Activated CD8-positive, alpha-beta T cell treated with anti-CD3 and anti-CD28 coated beads for 36 hours (primary cell): ENCODE measurements at regions of chr14 and their contacts with region 1.

Region 1: DNA sequence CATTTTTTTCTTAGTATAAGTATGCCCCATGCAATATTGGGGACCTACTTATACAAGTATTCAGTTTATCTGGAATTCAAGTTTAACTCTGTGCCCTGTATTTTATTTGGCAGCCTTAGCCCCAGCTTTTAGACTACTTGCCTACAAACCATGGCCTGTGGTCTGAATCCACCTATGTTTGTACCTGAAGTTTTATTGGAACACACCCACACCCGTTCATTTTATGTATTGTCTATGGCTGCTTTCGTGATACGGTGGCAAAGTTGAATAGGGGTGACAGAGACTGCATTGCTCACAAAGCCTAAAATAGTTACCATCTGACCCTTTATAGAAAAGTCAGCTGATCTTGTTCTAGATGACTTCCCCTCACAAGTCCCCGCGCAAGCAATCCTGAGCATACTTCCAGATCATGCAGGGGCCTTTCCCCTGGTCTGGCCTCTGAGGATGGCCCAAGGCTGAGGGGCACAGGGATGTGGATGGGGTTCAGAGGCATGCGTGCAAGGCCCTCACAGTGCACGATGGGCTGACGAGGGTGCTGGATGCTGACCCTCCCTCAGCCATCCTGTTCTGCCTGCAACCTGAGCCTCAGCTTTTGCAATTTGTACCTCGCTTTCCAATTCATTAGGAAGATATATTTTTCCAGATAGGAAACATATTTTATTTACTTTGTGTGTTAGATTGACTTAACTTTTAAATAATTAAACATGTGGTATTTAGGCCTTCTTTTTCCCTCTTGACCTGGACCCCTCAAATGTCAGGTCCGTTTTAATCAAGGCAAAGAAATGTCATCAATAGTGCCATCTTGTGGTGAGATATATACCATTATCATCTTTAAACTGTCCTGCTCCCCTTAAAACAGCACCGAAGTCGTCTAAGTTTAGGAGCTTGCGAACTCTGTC is 527.3 kb upstream of the CCDC196 start:
- DNase-seq: no peak
- ATAC-seq: peak; percentile 55
- H3K4me3 Mint-ChIP-seq: no peak overlapping the region
- H3K27ac Mint-ChIP-seq: no peak overlapping the region
- H3K4me1 Mint-ChIP-seq: peaks cover 22% of the 10 kb centered on the region
- H3K27me3 Mint-ChIP-seq: no peaks in the 10 kb centered on the region
- CTCF ChIP-seq: peak; percentile 81

Region 2: DNA sequence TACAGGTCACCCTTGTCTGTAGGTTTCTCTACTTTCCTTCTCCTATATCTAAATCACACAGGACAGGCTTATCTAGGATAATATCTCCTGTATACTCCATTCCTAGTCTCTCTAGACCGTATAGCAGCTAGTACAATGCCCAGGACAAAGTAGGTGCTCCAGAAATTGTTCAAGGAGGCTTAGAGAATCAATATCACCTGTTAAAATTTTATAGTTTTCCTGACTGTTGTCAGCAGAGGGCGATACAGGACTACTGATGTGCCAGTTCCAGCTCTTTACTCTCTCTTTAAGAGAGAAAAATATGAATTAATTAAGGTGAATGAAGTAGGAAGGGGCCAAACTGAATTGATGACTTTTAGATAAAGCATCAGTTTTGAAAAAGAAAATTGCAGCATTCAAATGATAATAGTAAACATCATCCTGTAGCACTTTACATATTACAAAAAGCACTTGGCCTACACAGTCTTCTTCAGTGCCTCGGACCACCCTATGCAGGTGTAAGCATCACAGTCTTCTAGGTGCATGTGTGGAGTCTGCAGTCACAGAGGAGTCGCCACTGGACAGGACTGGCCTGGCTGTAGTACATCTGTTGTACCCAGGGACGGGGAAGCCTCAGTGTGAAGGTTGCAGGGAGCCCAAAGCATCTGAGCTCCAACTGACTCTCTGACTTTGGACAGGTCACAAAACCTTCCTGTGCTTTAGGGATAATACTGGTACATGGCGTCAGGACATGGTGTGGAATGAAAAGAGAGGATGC is 794.7 kb before region 1 on chr14:
- CTCF ChIA-PET with region 1: interaction called, 19 read pairs
- POLR2A ChIA-PET with region 1: no interaction called
- intact Hi-C with region 1: loop called (anchors 10 kb)
- DNase-seq: peak; percentile 54
- ATAC-seq: peak; percentile 65
- H3K4me3 Mint-ChIP-seq: no peak overlapping the region
- H3K27ac Mint-ChIP-seq: no peak overlapping the region
- H3K4me1 Mint-ChIP-seq: peaks cover 24% of the 10 kb centered on the region
- H3K27me3 Mint-ChIP-seq: no peaks in the 10 kb centered on the region
- CTCF ChIP-seq: peak; percentile 79

Region 3: DNA sequence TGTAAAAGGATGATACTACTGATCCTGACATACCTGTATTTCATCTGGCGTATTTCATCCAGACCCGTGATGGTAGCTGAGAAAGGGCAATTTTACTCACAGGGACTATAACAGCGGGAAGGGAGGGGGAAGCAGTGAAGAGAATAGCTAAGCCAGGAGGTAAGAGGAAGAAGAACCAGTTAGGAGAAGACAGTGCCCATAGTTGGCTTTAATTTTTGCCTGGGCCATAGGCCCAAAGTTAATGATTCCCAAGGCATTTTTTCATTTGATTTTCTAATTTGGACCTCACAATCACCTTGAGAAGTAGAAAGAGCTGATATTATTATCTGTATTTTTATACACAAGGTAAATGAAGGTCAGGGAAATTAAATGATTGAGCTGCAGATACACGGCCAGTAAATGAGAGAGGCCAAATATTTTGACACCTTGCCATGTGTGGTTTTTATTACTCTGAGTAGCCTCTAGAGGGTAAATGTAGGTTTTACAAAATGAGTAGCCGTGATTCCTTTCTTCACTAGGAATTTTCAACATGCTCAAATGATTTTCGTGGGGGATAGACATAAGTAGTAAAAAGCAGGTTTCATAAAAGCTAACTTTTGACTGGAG is 164.1 kb before region 1 on chr14:
- CTCF ChIA-PET with region 1: interaction called, 11 read pairs
- POLR2A ChIA-PET with region 1: no interaction called
- intact Hi-C with region 1: no loop called
- DNase-seq: no peak
- ATAC-seq: no peak
- H3K4me3 Mint-ChIP-seq: no peak overlapping the region
- H3K27ac Mint-ChIP-seq: no peak overlapping the region
- H3K4me1 Mint-ChIP-seq: no peaks in the 10 kb centered on the region
- H3K27me3 Mint-ChIP-seq: no peaks in the 10 kb centered on the region
- CTCF ChIP-seq: no peak

Region 4: DNA sequence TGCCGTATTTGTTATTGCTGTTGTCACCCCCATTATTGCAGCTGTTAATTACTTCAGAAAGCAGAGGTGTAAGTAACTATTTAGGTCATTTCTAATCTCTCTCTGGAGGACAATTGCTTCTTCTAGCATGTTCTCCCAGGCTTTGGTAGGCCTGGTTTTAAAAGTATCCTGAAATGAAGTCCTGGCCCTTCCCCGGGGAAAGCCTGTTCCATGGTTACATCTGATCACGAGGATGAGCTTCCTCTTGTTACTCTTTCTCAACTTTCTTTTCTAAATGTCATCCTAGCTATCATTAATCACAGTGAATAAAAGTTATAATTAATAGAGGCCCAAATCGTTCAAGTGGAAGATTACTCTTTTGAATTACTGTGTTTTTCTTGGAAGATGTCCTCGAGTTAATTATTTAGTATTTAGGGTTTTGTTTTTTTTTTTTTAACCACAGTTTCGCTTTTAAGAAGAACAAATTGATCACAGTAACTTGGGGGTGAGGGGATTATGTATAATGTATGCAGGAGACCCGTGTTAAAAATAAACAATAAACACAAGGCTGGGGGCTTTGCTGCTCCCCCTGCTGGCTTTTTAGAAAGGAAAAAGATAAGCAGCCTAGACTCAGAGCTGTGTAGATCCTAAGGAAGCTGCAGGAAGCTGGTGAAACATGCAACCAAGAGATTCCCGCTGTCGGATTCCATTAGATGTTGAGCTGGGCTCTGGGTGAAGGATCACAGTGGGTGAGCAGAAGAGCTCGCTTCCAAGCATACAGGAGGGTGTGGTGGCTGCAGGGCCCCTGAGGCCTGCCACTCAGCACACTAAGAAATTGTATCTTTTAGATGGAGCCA is 126.3 kb before region 1 on chr14:
- CTCF ChIA-PET with region 1: interaction called, 98 read pairs
- POLR2A ChIA-PET with region 1: no interaction called
- intact Hi-C with region 1: no loop called
- DNase-seq: no peak
- ATAC-seq: no peak
- H3K4me3 Mint-ChIP-seq: no peak overlapping the region
- H3K27ac Mint-ChIP-seq: no peak overlapping the region
- H3K4me1 Mint-ChIP-seq: peaks cover 24% of the 10 kb centered on the region
- H3K27me3 Mint-ChIP-seq: no peaks in the 10 kb centered on the region
- CTCF ChIP-seq: peak; percentile 33

Region 5: GRCh38 chr14:65866886-65867285 is 92.0 kb before region 1 on chr14:
- CTCF ChIA-PET with region 1: interaction called, 10 read pairs
- POLR2A ChIA-PET with region 1: no interaction called
- intact Hi-C with region 1: no loop called
- DNase-seq: no peak
- ATAC-seq: no peak
- H3K4me3 Mint-ChIP-seq: no peak overlapping the region
- H3K27ac Mint-ChIP-seq: no peak overlapping the region
- H3K4me1 Mint-ChIP-seq: peaks cover 45% of the 10 kb centered on the region
- H3K27me3 Mint-ChIP-seq: no peaks in the 10 kb centered on the region
- CTCF ChIP-seq: no peak

Region 6: GRCh38 chr14:65927931-65928356 is 31.0 kb before region 1 on chr14:
- CTCF ChIA-PET with region 1: interaction called, 43 read pairs
- POLR2A ChIA-PET with region 1: interaction called, 3 read pairs
- intact Hi-C with region 1: no loop called
- DNase-seq: peak; percentile 95
- ATAC-seq: peak; percentile 94
- H3K4me3 Mint-ChIP-seq: peak overlapping the region; percentile 34
- H3K27ac Mint-ChIP-seq: peak overlapping the region; percentile 75
- H3K4me1 Mint-ChIP-seq: peaks cover 48% of the 10 kb centered on the region
- H3K27me3 Mint-ChIP-seq: no peaks in the 10 kb centered on the region
- CTCF ChIP-seq: no peak

Region 7: DNA sequence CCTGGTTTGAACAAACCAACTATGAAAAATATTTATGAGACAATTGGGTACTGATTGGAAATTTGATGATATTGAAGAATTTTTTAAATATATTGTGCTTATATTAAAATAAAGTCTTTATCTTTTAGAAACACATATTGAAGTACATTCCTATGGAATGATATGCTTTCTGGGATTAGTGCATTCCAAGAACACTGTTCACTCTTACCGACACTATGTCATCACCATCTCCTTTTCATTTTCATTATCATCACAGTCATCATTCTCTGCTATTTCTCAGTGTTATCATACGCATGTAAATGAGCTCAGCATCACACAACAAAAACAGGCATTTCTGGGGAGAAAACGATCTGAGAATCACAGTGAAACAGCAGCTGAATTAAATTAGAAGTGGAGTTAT is 14.0 kb after region 1 on chr14:
- CTCF ChIA-PET with region 1: interaction called, 19 read pairs
- POLR2A ChIA-PET with region 1: no interaction called
- intact Hi-C with region 1: no loop called
- DNase-seq: no peak
- ATAC-seq: no peak
- H3K4me3 Mint-ChIP-seq: no peak overlapping the region
- H3K27ac Mint-ChIP-seq: no peak overlapping the region
- H3K4me1 Mint-ChIP-seq: no peaks in the 10 kb centered on the region
- H3K27me3 Mint-ChIP-seq: no peaks in the 10 kb centered on the region
- CTCF ChIP-seq: no peak